Activated CD8-positive, alpha-beta T cell treated with anti-CD3 and anti-CD28 coated beads for 36 hours (primary cell): ENCODE measurements at regions of chr19 and their contacts with region 1.

Region 1: GRCh38 chr19:39052243-39052746 is 19.9 kb upstream of the FBXO27 start:
- DNase-seq: peak; percentile 83
- ATAC-seq: peak; percentile 75
- H3K4me3 Mint-ChIP-seq: no peak overlapping the region
- H3K27ac Mint-ChIP-seq: no peak overlapping the region
- H3K4me1 Mint-ChIP-seq: no peaks in the 10 kb centered on the region
- H3K27me3 Mint-ChIP-seq: no peaks in the 10 kb centered on the region
- CTCF ChIP-seq: peak; percentile 99

Region 2: DNA sequence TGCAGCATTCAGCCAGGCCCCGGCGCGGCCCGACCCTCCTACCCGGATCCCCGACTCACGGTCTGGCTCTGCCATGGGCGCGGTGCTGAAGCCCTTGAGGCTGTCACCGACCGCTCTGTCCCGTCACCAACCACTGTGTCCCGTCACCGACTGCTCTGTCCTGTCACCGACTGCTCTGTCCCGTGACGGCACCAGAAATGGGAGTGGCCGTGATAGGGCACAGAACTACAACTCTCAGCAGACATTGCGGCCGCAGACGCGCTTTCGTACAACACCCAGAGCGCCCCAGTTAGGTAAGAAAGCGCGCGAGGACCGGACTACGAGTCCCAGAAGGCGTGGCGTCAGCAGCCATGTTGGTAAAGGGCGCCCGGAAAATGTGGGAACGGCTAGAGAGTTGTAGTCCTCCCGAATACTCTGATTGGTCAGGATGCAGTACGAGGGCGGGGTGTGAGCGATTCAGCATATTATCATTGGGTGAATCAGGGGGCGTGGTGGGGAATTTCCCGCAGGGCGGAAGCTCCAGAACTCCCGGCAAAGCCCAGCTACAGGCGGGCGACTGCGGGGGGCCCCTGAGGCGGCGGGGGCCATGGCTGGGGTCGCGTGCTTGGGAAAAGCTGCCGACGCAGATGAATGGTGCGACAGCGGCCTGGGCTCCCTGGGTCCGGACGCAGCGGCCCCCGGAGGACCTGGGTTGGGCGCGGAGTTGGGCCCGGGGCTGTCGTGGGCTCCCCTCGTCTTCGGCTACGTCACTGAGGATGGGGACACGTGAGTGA is 152.7 kb before region 1 on chr19 and contains the starts of genes NFKBIB and SIRT2:
- CTCF ChIA-PET with region 1: no interaction called
- POLR2A ChIA-PET with region 1: no interaction called
- intact Hi-C with region 1: no loop called
- DNase-seq: peak; percentile 100
- ATAC-seq: peak; percentile 93
- H3K4me3 Mint-ChIP-seq: peak within 1 kb of the TSS; percentile 84
- H3K27ac Mint-ChIP-seq: peak within 1 kb of the TSS; percentile 93
- H3K4me1 Mint-ChIP-seq: peaks cover 30% of the 10 kb centered on the region
- H3K27me3 Mint-ChIP-seq: no peaks in the 10 kb centered on the region
- CTCF ChIP-seq: no peak
- total RNA-seq, gene NFKBIB: 56.5 to 57.9 TPM
- total RNA-seq, gene SIRT2: 20.0 to 21.5 TPM

Region 3: DNA sequence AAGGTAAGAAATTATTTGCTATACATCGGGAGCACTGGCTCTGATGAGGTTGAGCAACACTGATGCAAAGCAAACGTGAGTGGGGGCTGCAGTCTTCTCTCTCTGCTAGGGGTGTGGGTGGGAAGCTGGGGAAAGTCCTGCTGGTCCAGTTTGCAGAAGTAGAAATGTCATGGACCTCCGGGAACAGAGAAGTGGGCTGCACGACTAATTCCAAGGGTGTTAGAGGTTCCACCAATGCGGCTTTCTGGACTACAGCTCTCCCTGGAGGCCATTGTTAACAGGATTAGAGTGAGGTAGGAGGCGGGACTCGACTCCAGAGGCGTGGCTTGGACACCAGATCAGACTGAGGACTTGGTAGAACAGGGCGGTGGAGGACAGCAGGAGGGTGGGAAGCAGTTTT is 14.2 kb before region 1 on chr19:
- CTCF ChIA-PET with region 1: interaction called, 10 read pairs
- POLR2A ChIA-PET with region 1: no interaction called
- intact Hi-C with region 1: no loop called
- DNase-seq: peak; percentile 21
- ATAC-seq: peak; percentile 34
- H3K4me3 Mint-ChIP-seq: no peak overlapping the region
- H3K27ac Mint-ChIP-seq: no peak overlapping the region
- H3K4me1 Mint-ChIP-seq: no peaks in the 10 kb centered on the region
- H3K27me3 Mint-ChIP-seq: peaks cover 6% of the 10 kb centered on the region
- CTCF ChIP-seq: no peak

Region 4: DNA sequence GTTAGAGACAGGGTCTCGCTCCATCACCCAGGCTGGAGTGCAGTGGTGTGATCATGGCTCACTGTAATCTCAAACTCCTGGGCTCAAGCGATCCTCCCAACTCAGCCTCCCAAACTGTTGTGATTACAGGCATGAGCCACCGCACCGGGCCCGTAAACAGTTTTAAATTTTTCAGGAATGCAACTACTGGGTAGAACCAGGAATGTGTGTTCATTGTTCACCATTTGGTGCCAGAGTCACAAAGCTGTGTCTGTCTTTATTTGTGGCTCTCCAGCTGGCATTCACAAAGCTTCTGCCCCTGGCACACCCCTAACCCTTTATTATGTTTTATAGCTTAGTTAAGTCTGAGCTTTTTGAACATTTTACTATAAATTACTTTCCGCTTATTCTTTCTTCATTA is 12.1 kb after region 1 on chr19:
- CTCF ChIA-PET with region 1: interaction called, 23 read pairs
- POLR2A ChIA-PET with region 1: no interaction called
- intact Hi-C with region 1: no loop called
- DNase-seq: no peak
- ATAC-seq: no peak
- H3K4me3 Mint-ChIP-seq: no peak overlapping the region
- H3K27ac Mint-ChIP-seq: no peak overlapping the region
- H3K4me1 Mint-ChIP-seq: peaks cover 4% of the 10 kb centered on the region
- H3K27me3 Mint-ChIP-seq: no peaks in the 10 kb centered on the region
- CTCF ChIP-seq: no peak

Region 5: GRCh38 chr19:39074205-39074692 is 22.0 kb after region 1 on chr19:
- CTCF ChIA-PET with region 1: interaction called, 11 read pairs
- POLR2A ChIA-PET with region 1: interaction called, 3 read pairs
- intact Hi-C with region 1: no loop called
- DNase-seq: no peak
- ATAC-seq: no peak
- H3K4me3 Mint-ChIP-seq: no peak overlapping the region
- H3K27ac Mint-ChIP-seq: peak overlapping the region; percentile 93
- H3K4me1 Mint-ChIP-seq: peaks cover 13% of the 10 kb centered on the region
- H3K27me3 Mint-ChIP-seq: peaks cover 2% of the 10 kb centered on the region
- CTCF ChIP-seq: no peak

Region 6: GRCh38 chr19:39307046-39307823 is 254.9 kb after region 1 on chr19:
- CTCF ChIA-PET with region 1: no interaction called
- POLR2A ChIA-PET with region 1: no interaction called
- intact Hi-C with region 1: no loop called
- DNase-seq: no peak
- ATAC-seq: no peak
- H3K4me3 Mint-ChIP-seq: no peak overlapping the region
- H3K27ac Mint-ChIP-seq: no peak overlapping the region
- H3K4me1 Mint-ChIP-seq: peaks cover 9% of the 10 kb centered on the region
- H3K27me3 Mint-ChIP-seq: no peaks in the 10 kb centered on the region
- CTCF ChIP-seq: no peak